HEK293T (cell line): ENCODE measurements at regions of chr5 and their contacts with region 1.

Region 1: DNA sequence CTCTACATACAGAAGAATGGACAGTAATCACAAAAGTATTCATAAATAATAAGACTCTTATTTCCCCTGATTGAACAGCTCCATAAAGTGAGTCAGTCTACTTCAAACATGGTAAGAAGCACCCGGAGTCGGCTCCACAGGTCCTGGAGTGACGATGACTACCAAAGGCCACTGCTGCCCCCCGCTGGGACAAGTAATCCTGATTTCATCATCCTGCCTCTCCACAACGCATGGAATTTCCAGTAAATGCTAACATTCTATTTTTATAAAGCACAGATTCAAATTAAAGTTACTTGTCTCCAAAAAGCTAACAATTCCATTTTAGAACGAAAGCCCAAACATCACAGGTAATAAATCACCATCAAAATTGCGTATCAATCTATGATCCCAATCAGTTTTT is 16.2 kb downstream of the ATPSCKMT start:
- DNase-seq: peak; percentile 31

Region 2: GRCh38 chr5:10249948-10250803 is 16.7 kb after region 1 on chr5 and contains the start of gene CCT5:
- CTCF ChIA-PET with region 1: interaction called, 3 read pairs
- POLR2A ChIA-PET with region 1: interaction called, 10 read pairs
- DNase-seq: peak; percentile 91